Activated CD8-positive, alpha-beta memory T cell treated with anti-CD3 and anti-CD28 coated beads, Interleukin-2, amount 10 ng/mL, durations not matched to agents 7 days and 5 days (primary cell): ENCODE measurements at regions of chr12 and their contacts with region 1.

Region 1: DNA sequence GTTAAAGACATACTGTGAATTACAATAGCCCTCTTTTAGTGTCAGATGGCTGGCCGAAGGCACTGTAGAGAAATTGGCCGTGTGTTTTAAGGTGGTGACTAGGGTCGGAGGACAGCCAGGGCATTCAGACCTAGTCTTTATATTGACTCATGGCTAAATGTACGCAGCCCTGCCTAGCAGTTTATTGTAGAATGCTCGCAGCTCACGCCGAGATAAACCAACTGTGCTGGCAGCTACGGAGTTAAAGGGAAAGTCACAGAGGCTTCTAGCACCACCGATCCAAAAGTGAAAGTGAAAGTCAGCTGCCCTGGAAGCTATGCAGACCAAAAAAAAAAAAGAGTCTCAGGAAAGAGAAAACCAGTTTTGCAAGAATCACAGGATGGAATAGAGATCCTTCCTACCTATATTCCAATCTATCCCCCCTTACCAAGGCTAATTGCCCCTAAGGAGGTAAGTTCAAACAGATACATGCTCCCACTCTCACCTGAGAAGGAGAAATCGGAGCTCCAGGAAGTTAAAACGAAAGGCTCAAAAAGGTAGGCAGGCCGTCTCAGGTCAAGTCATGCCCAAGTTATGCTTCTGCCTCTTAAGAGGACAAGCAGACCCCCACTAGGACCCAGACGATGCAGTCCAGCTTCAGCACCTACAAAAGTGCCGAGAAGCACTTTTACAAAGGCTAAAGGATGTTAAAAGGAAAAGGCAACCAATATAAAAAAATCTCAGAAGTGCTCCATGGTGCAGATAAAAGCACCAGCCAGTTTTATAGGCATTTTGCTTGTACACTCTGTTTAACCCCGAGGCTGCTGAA is 24.8 kb downstream of the KLRK1 start:
- DNase-seq: peak; percentile 85
- ATAC-seq: peak; percentile 68
- H3K4me3 Mint-ChIP-seq: no peak overlapping the region
- H3K27ac Mint-ChIP-seq: no peak overlapping the region
- H3K4me1 Mint-ChIP-seq: peaks cover 38% of the 10 kb centered on the region
- H3K27me3 Mint-ChIP-seq: no peaks in the 10 kb centered on the region

Region 2: DNA sequence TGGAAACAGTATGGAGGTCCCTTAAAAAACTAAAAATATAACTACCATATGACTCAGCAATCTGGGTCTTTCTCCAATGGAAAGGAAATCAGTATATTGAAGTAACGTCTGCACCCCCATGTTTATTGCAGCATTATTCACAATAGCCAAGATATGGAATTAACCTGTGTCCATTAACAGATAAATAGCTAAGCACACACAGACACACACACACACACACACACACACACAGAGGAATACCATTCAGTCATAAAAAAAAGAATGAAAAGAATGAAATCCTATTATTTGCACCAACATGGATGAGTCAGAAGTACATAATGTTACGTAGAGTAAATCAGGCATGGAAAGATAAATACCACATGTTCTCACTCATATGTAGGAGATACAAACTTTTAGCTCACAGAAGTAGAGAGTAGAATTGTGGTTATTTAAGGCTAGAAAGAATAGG is 20.2 kb after region 1 on chr12:
- CTCF ChIA-PET with region 1: interaction called, 19 read pairs
- DNase-seq: no peak
- ATAC-seq: peak; percentile 62
- H3K4me3 Mint-ChIP-seq: peak overlapping the region; percentile 91
- H3K27ac Mint-ChIP-seq: peak overlapping the region; percentile 96
- H3K4me1 Mint-ChIP-seq: peaks cover 58% of the 10 kb centered on the region
- H3K27me3 Mint-ChIP-seq: no peaks in the 10 kb centered on the region

Region 3: GRCh38 chr12:10409387-10409786 is 44.4 kb after region 1 on chr12 and contains the start of gene KLRC4:
- CTCF ChIA-PET with region 1: interaction called, 12 read pairs
- DNase-seq: peak; percentile 67
- ATAC-seq: peak; percentile 73
- H3K4me3 Mint-ChIP-seq: peak within 1 kb of the TSS; percentile 84
- H3K27ac Mint-ChIP-seq: peak within 1 kb of the TSS; percentile 88
- H3K4me1 Mint-ChIP-seq: peaks cover 32% of the 10 kb centered on the region
- H3K27me3 Mint-ChIP-seq: no peaks in the 10 kb centered on the region
- total RNA-seq, gene KLRC4: 29.2 to 33.7 TPM

Region 4: DNA sequence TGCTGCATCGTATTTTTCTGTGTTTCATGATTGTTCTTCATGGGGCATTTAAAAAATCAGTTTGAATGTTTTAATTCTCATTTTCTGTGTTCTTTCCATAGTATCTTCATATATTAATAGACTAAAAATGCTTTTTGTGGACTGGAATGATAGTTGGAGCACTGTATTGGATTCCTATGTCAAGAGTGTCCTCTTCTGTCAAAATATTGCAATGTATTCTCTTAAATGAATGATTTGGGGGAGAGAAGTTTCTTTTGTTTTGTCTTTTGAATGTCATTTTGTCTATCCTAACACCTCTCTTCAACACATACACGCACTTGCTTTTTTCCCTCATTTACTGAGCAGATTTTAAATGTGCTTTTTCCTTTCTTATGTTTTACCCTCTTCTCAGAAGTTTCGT is 136.0 kb after region 1 on chr12:
- CTCF ChIA-PET with region 1: interaction called, 14 read pairs
- DNase-seq: no peak
- ATAC-seq: no peak
- H3K4me3 Mint-ChIP-seq: peak overlapping the region; percentile 60
- H3K27ac Mint-ChIP-seq: peak overlapping the region; percentile 77
- H3K4me1 Mint-ChIP-seq: peaks cover 50% of the 10 kb centered on the region
- H3K27me3 Mint-ChIP-seq: no peaks in the 10 kb centered on the region

Region 5: DNA sequence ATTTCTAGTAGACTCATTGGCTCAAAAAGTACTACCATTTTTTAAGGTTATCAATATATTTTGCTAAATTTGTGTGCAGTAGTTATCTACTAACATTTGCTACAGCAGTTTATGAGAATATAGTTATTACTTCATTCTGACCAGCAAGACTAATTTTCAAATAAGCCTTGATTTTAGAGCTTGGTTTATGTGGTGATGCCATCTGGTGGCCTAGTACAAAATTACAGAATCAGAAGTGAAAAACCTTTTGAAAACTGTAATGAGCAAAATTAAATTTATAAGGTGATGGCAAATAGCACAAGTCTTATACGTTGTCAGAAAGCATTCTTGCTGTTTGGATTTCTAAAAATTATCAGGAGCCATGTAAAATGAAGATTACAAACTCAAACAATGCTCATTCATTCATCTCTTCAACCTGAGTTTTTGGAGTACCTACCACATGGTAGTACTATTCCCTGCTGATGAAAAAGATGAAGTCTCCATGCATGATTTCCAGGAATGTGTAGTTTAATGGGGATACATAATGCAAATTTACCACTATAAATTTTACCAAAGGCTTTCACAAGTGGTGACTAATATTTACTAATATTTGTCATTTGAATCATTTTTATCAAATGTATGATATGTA is 197.4 kb after region 1 on chr12:
- CTCF ChIA-PET with region 1: interaction called, 12 read pairs
- DNase-seq: no peak
- ATAC-seq: no peak
- H3K4me3 Mint-ChIP-seq: peak overlapping the region; percentile 12
- H3K27ac Mint-ChIP-seq: peak overlapping the region; percentile 29
- H3K4me1 Mint-ChIP-seq: peaks cover 72% of the 10 kb centered on the region
- H3K27me3 Mint-ChIP-seq: no peaks in the 10 kb centered on the region